MCF 10A (cell line): ENCODE measurements at regions of chr20 and their contacts with region 1.

Region 1: GRCh38 chr20:44115762-44116644 is 71.0 kb downstream of the JPH2 start:
- DNase-seq: no peak
- H3K4me3 Mint-ChIP-seq: no peak overlapping the region
- H3K27ac Mint-ChIP-seq: no peak overlapping the region
- H3K4me1 Mint-ChIP-seq: peaks cover 6% of the 10 kb centered on the region
- H3K27me3 Mint-ChIP-seq: no peaks in the 10 kb centered on the region
- CTCF ChIP-seq: no peak

Region 2: DNA sequence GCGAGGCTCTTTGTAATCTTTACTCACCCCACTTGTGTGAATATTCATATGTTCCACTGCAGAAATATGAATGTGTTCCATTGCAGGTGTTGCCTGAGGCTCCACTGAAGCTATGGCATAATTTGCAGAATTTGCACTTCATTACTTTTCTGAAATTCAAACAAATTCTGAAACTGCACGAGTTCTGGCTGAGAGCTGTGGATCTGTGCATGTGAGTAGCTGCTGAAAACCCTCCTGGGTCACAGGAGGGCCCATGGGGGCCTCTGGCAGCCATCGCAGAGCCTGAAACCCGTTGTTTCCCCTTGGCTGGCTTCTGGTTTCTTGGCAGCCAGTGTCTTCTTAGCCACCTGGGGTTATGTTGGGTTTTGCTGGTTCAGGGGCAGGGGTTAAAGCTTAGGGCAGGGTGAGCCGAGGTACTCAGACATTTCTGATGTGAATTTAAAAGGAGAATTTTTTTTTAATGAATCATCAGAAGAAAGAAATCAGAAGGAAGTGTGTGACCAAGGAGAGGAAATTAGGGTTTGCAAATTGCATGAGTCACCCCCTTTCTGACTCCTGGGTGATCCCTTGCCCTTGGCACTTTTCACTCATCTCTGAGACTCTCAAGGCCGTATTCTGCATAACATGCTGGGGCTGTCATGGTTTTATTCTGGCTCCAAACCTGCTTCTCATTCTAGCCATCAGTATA is 160.8 kb before region 1 on chr20:
- CTCF ChIA-PET with region 1: no interaction called
- POLR2A ChIA-PET with region 1: no interaction called
- intact Hi-C with region 1: no loop called
- DNase-seq: peak; percentile 96
- H3K4me3 Mint-ChIP-seq: no peak overlapping the region
- H3K27ac Mint-ChIP-seq: no peak overlapping the region
- H3K4me1 Mint-ChIP-seq: peaks cover 43% of the 10 kb centered on the region
- H3K27me3 Mint-ChIP-seq: no peaks in the 10 kb centered on the region
- CTCF ChIP-seq: no peak

Region 3: GRCh38 chr20:44129911-44130718 is 14.1 kb after region 1 on chr20:
- CTCF ChIA-PET with region 1: interaction called, 17 read pairs
- POLR2A ChIA-PET with region 1: interaction called, 5 read pairs
- intact Hi-C with region 1: no loop called
- DNase-seq: no peak
- H3K4me3 Mint-ChIP-seq: no peak overlapping the region
- H3K27ac Mint-ChIP-seq: no peak overlapping the region
- H3K4me1 Mint-ChIP-seq: no peaks in the 10 kb centered on the region
- H3K27me3 Mint-ChIP-seq: no peaks in the 10 kb centered on the region
- CTCF ChIP-seq: no peak

Region 4: DNA sequence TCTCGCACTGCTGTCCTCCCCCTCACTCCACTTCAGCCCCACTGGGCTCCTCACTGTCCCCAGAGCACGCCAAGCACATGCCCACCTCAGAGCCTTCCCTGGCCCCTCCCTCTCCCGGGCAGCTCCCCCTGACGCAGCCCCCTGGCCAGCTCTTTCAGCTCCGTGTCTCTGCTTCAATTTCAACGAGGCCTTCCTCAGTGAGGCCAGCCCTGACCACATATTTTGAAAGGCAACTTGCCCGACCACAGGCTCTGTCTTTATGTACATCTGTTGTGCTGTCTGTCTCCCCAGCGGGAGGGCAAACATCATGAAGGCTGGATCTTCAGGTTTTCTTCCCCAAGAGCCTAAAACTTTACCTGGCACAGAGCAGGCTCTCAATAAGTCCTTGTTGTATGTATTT is 26.4 kb after region 1 on chr20:
- CTCF ChIA-PET with region 1: interaction called, 13 read pairs
- POLR2A ChIA-PET with region 1: interaction called, 3 read pairs
- intact Hi-C with region 1: no loop called
- DNase-seq: no peak
- H3K4me3 Mint-ChIP-seq: no peak overlapping the region
- H3K27ac Mint-ChIP-seq: no peak overlapping the region
- H3K4me1 Mint-ChIP-seq: no peaks in the 10 kb centered on the region
- H3K27me3 Mint-ChIP-seq: no peaks in the 10 kb centered on the region
- CTCF ChIP-seq: no peak

Region 5: DNA sequence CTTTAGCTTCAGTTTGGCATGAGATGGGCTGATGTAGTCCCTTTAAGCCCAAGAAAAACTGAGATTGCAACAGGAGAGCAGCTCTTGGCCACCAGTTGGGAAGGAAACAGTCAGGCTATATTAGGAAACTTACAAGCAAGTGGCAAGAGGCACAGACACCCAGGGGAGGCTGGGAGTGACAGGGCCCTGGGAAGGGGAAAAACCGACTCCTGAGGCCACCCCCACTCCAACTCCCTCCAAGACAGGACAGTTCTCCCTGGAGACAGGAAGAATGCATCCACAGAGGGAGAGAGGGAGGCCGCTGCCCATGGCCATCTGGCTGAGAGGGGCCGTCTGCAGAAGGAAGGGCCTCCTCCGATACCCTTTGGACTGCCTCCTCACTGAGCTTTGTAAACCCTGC is 50.5 kb after region 1 on chr20:
- CTCF ChIA-PET with region 1: interaction called, 13 read pairs
- POLR2A ChIA-PET with region 1: interaction called, 9 read pairs
- intact Hi-C with region 1: no loop called
- DNase-seq: peak; percentile 47
- H3K4me3 Mint-ChIP-seq: no peak overlapping the region
- H3K27ac Mint-ChIP-seq: no peak overlapping the region
- H3K4me1 Mint-ChIP-seq: peaks cover 23% of the 10 kb centered on the region
- H3K27me3 Mint-ChIP-seq: no peaks in the 10 kb centered on the region
- CTCF ChIP-seq: no peak

Region 6: GRCh38 chr20:44196271-44196670 is 80.3 kb after region 1 on chr20:
- CTCF ChIA-PET with region 1: interaction called, 638 read pairs
- POLR2A ChIA-PET with region 1: interaction called, 117 read pairs
- intact Hi-C with region 1: no loop called
- DNase-seq: no peak
- H3K4me3 Mint-ChIP-seq: no peak overlapping the region
- H3K27ac Mint-ChIP-seq: no peak overlapping the region
- H3K4me1 Mint-ChIP-seq: peaks cover 10% of the 10 kb centered on the region
- H3K27me3 Mint-ChIP-seq: peaks cover 11% of the 10 kb centered on the region
- CTCF ChIP-seq: peak; percentile 19

Region 7: DNA sequence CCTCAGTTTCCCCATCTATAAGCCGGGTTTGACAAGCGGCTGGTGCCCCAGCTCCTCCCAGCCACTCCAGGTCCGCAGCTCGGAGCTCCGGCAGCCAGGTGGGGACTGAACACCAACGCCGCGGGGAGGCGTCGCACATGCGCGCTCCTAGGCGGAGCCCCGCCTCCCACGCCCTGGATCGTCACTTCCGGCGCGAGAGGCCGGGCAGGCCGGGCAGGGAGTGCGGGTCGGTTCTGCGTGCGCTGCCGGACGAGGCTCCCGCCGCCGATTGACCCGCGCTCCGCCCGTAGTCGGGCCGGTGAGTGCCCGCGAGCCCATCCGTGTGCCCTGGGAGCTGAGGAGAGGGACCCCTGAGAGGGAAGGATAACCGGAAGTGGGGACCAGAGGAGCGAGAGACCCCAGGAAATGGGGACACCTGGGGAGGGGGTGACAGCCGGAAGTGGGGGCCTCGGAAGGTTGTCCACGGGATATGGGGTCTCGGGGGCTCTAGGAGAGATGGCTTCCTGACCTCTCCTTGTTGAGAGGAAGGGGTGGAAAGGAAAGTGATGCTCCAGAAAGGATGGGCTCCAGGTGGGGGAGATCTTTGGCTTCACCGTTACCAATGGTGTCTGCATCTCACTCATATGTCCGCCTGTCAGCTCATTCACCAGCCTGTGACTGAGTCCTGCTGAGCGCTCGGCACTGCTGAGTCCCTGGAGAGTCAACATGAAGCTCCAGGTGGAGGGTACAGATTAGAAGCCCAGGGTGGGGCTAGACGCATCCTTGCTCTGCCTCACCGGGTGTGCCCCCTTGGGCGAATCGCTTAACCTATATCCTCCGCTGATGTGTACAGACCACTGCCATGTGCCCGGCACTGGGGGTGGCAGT is 359.9 kb after region 1 on chr20 and contains the start of gene TTPAL:
- CTCF ChIA-PET with region 1: interaction called, 20 read pairs
- POLR2A ChIA-PET with region 1: no interaction called
- intact Hi-C with region 1: loop called (anchors 10 kb)
- DNase-seq: peak; percentile 89
- H3K4me3 Mint-ChIP-seq: peak within 1 kb of the TSS; percentile 98
- H3K27ac Mint-ChIP-seq: peak within 1 kb of the TSS; percentile 98
- H3K4me1 Mint-ChIP-seq: peaks cover 23% of the 10 kb centered on the region
- H3K27me3 Mint-ChIP-seq: no peaks in the 10 kb centered on the region
- CTCF ChIP-seq: no peak
- total RNA-seq, gene TTPAL: 34.1 and 35.4 TPM in 2 replicates